ENCODE measurements at regions of chr11 and their contacts with region 1.

Region 1: DNA sequence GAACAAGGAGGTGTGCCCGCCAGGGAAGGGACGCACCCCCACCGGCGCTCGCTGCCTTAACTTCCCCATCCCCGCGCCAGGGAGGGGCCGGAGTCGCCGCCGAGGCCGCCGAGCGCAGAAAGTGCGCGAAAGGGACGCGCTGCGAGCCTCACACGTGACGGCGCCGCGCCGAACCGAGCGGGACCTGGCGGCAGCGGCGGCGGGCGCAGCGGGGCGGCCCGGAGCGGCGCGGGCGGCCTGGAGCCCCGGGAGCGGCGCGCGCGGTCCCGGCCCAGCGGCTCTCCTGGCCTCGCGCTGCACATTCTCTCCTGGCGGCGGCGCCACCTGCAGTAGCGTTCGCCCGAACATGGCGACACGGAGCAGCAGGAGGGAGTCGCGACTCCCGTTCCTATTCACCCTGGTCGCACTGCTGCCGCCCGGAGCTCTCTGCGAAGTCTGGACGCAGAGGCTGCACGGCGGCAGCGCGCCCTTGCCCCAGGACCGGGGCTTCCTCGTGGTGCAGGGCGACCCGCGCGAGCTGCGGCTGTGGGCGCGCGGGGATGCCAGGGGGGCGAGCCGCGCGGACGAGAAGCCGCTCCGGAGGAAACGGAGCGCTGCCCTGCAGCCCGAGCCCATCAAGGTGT is at the start of gene SORL1:
- DNase-seq: peak; percentile 86
- H3K4me3 Mint-ChIP-seq: peak within 1 kb of the TSS; percentile 87
- H3K27ac Mint-ChIP-seq: peak within 1 kb of the TSS; percentile 92
- H3K4me1 Mint-ChIP-seq: peaks cover 81% of the 10 kb centered on the region
- H3K27me3 Mint-ChIP-seq: no peaks in the 10 kb centered on the region
- total RNA-seq, gene SORL1: 66.8 to 67.2 TPM

Region 2: DNA sequence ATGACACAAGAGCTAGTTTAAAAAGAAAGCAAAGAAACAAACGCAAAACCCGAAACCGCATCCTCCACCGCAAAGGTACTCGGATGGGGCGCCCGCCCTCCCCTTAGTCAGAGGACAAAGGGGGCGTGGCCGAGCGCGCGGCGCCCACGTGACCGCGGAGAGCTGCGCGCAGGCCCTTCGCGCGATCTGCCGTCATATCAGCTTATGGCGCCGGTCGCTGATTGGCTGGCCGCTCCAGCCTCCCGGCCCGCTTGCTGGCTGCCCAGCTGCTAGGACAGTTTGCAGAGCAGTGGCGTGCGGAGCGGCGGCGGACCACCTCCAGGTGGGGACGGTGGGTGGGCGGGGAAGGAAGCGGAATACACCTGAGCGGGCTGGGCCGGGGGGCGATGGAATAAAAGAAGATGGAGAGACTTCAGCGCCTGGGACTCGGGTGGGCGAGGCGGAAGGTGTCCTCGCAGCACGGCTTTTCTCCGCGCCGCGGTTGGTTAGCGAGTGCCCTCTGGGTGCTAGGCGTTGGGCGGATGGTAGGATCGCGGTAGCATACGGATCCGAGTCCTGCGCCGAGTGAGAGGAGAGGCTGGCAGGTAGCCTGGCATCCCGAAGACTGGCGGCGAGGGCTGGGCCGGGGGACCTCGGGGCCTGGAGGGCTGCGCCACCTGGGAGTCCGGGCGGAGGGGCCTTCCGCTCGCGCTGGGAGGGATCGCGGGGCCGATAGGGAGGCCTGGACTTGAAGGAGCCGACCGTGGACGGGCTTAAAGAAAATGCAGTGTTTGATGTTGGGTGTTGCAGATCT is 159.4 kb before region 1 on chr11 and contains the start of gene SC5D:
- CTCF ChIA-PET with region 1: no interaction called
- intact Hi-C with region 1: loop called (anchors 1 kb)
- DNase-seq: peak; percentile 97
- H3K4me3 Mint-ChIP-seq: peak within 1 kb of the TSS; percentile 90
- H3K27ac Mint-ChIP-seq: peak within 1 kb of the TSS; percentile 95
- H3K4me1 Mint-ChIP-seq: peaks cover 32% of the 10 kb centered on the region
- H3K27me3 Mint-ChIP-seq: no peaks in the 10 kb centered on the region
- total RNA-seq, gene SC5D: 29.6 to 31.7 TPM

Region 3: DNA sequence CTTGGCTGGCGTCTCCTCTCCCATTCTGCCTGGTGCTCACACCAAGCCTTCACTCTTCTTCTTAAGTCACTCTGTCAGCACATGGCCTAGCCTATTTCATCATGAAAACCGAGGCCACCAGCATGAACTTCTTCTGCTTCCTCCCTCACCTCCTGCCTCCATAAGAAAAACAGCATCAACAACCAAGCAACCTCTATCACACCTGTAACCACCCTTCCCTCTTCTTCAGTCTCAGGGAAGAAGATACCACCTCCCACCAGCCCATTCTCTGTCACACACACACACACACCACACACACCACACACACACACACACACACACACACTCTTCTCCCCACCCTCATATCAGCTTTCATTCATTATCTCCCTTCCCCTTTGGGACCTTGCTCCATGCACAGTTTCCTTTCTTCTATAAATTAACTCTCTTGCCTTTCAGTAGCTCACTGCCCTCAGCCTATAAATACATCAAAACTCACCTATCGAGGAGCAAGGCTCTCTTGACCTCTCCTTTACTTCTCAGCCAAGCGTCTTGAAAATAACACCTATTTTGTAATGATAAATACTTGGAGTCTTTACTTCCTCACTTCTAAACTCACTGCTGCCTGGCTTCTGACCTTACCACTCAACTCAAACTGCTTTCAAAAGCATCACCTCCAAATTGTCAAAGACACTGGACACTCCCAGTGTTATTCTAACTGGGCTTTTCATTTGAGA is 123.0 kb before region 1 on chr11:
- CTCF ChIA-PET with region 1: no interaction called
- intact Hi-C with region 1: loop called (anchors 2 kb)
- DNase-seq: peak; percentile 30
- H3K4me3 Mint-ChIP-seq: no peak overlapping the region
- H3K27ac Mint-ChIP-seq: no peak overlapping the region
- H3K4me1 Mint-ChIP-seq: no peaks in the 10 kb centered on the region
- H3K27me3 Mint-ChIP-seq: no peaks in the 10 kb centered on the region

Region 4: DNA sequence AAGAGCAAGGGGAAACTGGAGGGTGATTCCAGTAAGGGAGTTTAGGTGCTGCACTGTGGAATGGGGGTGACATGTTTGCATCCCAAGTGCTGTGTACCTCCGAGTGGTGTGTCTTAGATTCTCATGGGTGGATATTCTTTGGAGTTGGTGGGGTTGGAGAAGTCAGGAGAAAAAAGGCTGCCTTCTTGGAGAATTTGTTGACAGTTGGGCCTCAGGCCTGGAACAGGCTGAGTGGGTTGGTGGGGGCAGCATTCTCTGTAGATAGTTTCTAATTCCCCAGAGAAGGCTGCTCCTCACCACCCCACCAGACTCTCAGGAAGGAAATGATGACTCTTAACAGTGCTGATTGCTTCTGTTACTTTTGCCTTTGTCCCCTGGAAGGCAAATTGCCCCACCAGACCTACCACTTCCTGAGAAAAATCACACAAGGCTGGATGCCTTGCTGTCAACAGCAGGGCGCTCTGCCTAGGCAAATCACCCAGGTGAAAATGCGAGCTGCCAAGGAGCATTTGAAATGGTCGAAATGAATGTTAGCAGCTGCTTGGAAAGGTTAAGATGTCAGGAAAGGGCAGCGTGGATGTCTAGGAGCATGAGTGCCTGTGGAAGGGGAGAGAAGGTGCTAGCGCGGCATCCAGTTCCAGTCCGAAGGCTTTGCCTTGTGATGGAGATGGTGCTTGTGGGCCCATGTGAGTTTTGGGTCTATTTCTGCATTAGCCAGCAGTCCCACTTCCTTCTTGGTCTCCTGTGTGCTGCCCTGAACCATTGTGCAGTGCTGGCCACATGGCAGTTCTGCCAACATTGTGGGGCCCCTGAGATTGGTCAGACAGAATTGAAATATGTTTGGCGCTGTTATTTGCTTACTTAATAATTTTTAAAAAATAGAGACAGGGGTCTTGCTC is 30.4 kb after region 1 on chr11:
- CTCF ChIA-PET with region 1: interaction called, 6 read pairs
- intact Hi-C with region 1: loop called (anchors 1 kb)
- DNase-seq: peak; percentile 80
- H3K4me3 Mint-ChIP-seq: peak overlapping the region; percentile 88
- H3K27ac Mint-ChIP-seq: peak overlapping the region; percentile 98
- H3K4me1 Mint-ChIP-seq: peaks cover 39% of the 10 kb centered on the region
- H3K27me3 Mint-ChIP-seq: no peaks in the 10 kb centered on the region

Region 5: GRCh38 chr11:121591405-121592033 is 139.4 kb after region 1 on chr11:
- CTCF ChIA-PET with region 1: interaction called, 23 read pairs
- intact Hi-C with region 1: loop called (anchors 1 kb)
- DNase-seq: peak; percentile 87
- H3K4me3 Mint-ChIP-seq: no peak overlapping the region
- H3K27ac Mint-ChIP-seq: no peak overlapping the region
- H3K4me1 Mint-ChIP-seq: peaks cover 14% of the 10 kb centered on the region
- H3K27me3 Mint-ChIP-seq: no peaks in the 10 kb centered on the region

Region 6: DNA sequence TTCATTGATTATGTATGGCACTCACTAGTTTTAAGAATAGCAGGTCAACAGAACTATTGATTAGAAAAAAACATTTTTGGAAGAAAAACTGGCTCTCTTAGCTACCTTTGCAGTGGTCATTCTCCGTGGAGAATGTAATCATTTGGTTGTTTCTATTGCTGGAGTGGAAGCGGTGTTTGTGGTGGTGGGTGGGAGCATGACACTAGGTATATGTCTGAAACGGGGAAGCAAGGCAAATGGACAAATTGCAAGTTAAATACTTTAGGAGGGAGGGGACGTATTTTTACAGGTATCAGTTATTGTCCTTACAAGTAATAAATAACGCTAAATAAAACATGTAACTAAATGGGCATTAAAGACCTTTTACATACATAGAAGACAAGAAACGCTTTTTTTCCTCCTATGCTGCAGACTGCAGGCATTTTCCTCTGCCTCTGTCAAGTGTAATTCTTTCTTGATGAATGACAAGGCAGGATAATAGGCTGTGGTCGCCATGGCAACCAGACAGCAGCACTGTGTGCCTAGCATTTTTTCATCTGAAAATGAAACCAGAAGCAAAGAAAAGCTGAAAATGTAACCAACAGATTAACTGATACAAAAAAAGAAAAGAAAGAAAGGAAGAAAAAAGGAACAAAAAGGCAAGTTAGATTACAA is 617.7 kb after region 1 on chr11:
- CTCF ChIA-PET with region 1: no interaction called
- intact Hi-C with region 1: no loop called
- DNase-seq: peak; percentile 5
- H3K4me3 Mint-ChIP-seq: no peak overlapping the region
- H3K27ac Mint-ChIP-seq: no peak overlapping the region
- H3K4me1 Mint-ChIP-seq: no peaks in the 10 kb centered on the region
- H3K27me3 Mint-ChIP-seq: peaks cover 6% of the 10 kb centered on the region